Activated CD4-positive, alpha-beta memory T cell treated with anti-CD3 and anti-CD28 coated beads, Interleukin-2, amount 10 ng/mL, durations not matched to agents 7 days and 5 days (primary cell): ENCODE measurements at regions of chr11 and their contacts with region 1.

Region 1: GRCh38 chr11:102495161-102496042 is 35.1 kb downstream of the MMP7 start:
- DNase-seq: peak; percentile 24
- H3K4me3 Mint-ChIP-seq: no peak overlapping the region
- H3K27ac Mint-ChIP-seq: no peak overlapping the region
- H3K4me1 Mint-ChIP-seq: peaks cover 7% of the 10 kb centered on the region
- H3K27me3 Mint-ChIP-seq: peaks cover 24% of the 10 kb centered on the region

Region 2: GRCh38 chr11:102346748-102347461 is 148.5 kb before region 1 on chr11 and contains the start of gene BIRC2:
- CTCF ChIA-PET with region 1: interaction called, 41 read pairs
- POLR2A ChIA-PET with region 1: interaction called, 3 read pairs
- DNase-seq: peak; percentile 95
- H3K4me3 Mint-ChIP-seq: peak within 1 kb of the TSS; percentile 98
- H3K27ac Mint-ChIP-seq: peak within 1 kb of the TSS; percentile 97
- H3K4me1 Mint-ChIP-seq: peaks cover 34% of the 10 kb centered on the region
- H3K27me3 Mint-ChIP-seq: no peaks in the 10 kb centered on the region
- total RNA-seq, gene BIRC2: 36.0 to 39.7 TPM

Region 3: GRCh38 chr11:102367364-102367763 is 128.0 kb before region 1 on chr11:
- CTCF ChIA-PET with region 1: interaction called, 20 read pairs
- POLR2A ChIA-PET with region 1: no interaction called
- DNase-seq: no peak
- H3K4me3 Mint-ChIP-seq: no peak overlapping the region
- H3K27ac Mint-ChIP-seq: no peak overlapping the region
- H3K4me1 Mint-ChIP-seq: peaks cover 25% of the 10 kb centered on the region
- H3K27me3 Mint-ChIP-seq: no peaks in the 10 kb centered on the region

Region 4: GRCh38 chr11:102680945-102681344 is 185.5 kb after region 1 on chr11:
- CTCF ChIA-PET with region 1: no interaction called
- POLR2A ChIA-PET with region 1: no interaction called
- DNase-seq: no peak
- H3K4me3 Mint-ChIP-seq: no peak overlapping the region
- H3K27ac Mint-ChIP-seq: no peak overlapping the region
- H3K4me1 Mint-ChIP-seq: no peaks in the 10 kb centered on the region
- H3K27me3 Mint-ChIP-seq: peaks cover 14% of the 10 kb centered on the region